Prostate gland (tissue), 2 donors: ENCODE measurements at regions of chr3 and their contacts with region 1.

Region 1: GRCh38 chr3:188052169-188053030 is 101.6 kb upstream of the LPP start:
- DNase-seq: peak; percentile 66
- H3K4me3 ChIP-seq: no peak overlapping the region
- H3K27ac ChIP-seq: peak overlapping the region; percentile 44 to 75
- H3K4me1 ChIP-seq: peaks cover 9% of the 10 kb centered on the region
- H3K27me3 ChIP-seq: no peaks in the 10 kb centered on the region
- CTCF ChIP-seq: peak; percentile 19 to 73 (median 40)
- POLR2A ChIP-seq: no peak

Region 2: DNA sequence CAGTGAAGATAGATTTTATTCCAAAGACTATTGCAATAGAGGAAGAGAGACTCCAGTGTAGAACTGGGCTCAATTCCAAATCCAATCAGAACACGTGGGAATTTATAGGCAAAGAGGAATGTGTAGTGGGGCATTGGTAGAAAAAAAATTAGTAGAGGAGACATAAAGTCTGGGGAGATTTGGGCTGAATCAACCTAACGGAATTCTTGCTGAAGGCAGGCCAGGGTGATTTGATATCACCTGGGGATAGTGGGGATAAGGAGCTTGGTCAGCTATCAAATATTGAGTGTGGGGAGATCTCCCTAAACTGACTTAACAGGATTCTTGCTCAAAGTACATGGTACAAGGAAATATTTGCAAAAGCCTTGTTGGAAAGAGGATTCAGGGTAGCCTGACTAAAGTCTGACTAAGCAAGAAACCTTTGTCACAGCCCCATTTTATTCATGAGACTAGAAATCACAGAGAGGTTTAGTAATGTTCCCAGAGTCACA is 411.8 kb before region 1 on chr3:
- intact Hi-C with region 1: no loop called
- DNase-seq: no peak
- H3K4me3 ChIP-seq: no peak overlapping the region
- H3K27ac ChIP-seq: no peak overlapping the region
- H3K4me1 ChIP-seq: no peaks in the 10 kb centered on the region
- H3K27me3 ChIP-seq: no peaks in the 10 kb centered on the region
- CTCF ChIP-seq: no peak
- POLR2A ChIP-seq: no peak

Region 3: GRCh38 chr3:187922704-187923416 is 129.5 kb before region 1 on chr3:
- intact Hi-C with region 1: no loop called
- DNase-seq: no peak
- H3K4me3 ChIP-seq: no peak overlapping the region
- H3K27ac ChIP-seq: no peak overlapping the region
- H3K4me1 ChIP-seq: no peaks in the 10 kb centered on the region
- H3K27me3 ChIP-seq: no peaks in the 10 kb centered on the region
- CTCF ChIP-seq: no peak
- POLR2A ChIP-seq: no peak

Region 4: DNA sequence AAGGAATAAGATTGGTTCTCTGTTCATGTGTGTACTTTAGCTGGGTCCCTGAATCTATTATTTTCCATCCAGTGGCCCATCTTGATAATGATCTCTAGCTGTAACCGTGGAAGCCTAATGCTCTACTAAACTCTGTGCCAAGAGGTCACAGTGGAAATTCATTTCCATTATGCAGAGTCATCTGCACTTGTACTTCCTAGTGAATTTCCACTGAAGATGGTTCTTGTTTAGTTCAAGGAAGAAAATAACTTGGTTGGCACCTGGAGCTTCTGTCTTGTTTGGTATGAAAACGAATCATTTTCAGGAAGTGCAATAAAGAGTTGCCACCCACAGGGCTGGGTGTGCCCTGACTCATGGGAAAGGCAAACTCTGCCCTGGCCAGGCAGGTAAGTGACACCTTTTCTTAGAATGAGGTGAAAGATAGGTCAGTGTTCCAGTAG is 111.9 kb after region 1 on chr3:
- intact Hi-C with region 1: no loop called
- DNase-seq: peak; percentile 56
- H3K4me3 ChIP-seq: no peak overlapping the region
- H3K27ac ChIP-seq: peak overlapping the region; percentile 58 to 61
- H3K4me1 ChIP-seq: peaks cover 5% of the 10 kb centered on the region
- H3K27me3 ChIP-seq: no peaks in the 10 kb centered on the region
- CTCF ChIP-seq: no peak
- POLR2A ChIP-seq: no peak

Region 5: GRCh38 chr3:188179006-188179966 is 126.9 kb after region 1 on chr3:
- intact Hi-C with region 1: loop called (anchors 5 kb)
- DNase-seq: peak; percentile 51
- H3K4me3 ChIP-seq: no peak overlapping the region
- H3K27ac ChIP-seq: peak overlapping the region; percentile 70 to 77
- H3K4me1 ChIP-seq: peaks cover 7% of the 10 kb centered on the region
- H3K27me3 ChIP-seq: no peaks in the 10 kb centered on the region
- CTCF ChIP-seq: peak in 1 of 4 experiments; percentile 17
- POLR2A ChIP-seq: no peak

Region 6: DNA sequence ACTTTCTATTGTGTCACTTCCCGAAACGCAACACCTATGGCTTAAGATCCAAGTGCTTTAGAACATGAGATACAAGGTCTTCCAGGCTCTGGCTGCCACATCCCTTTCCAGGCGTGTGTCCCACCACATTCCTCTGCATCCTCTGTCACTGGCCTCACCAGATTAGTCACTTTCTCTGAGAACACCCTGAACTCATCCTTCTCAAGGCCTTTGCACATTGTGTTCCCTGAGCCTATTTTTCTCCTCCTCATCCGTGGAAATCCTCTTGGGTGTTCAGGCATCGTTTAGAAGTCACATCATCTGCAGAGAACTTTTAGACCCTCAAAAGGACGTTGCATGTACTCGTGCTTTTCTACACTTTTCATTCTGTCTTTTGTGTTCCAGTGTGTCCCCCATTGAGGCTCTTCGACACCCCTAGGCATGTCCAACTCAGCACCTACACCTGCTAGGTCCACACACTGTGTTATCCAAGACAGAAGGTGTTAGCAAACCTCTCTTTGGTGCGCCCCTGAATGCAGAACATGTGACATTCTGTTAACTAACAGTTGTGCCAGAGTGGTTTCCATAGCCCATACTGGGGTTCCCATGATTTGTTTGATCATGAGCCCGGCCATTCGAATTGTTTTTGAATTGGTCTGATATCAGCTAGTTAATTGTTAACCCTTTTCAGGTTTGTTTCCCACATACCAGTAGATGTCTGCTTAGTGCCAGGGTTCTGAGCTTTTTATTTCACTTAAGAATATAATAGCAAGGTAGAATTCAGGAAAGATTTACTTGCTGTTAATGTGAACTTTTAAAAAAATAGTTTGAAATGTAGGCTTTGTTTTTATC is 168.8 kb after region 1 on chr3:
- intact Hi-C with region 1: loop called (anchors 5 kb)
- DNase-seq: no peak
- H3K4me3 ChIP-seq: no peak overlapping the region
- H3K27ac ChIP-seq: peak overlapping the region; percentile 67 to 80
- H3K4me1 ChIP-seq: no peaks in the 10 kb centered on the region
- H3K27me3 ChIP-seq: no peaks in the 10 kb centered on the region
- CTCF ChIP-seq: no peak
- POLR2A ChIP-seq: no peak

Region 7: GRCh38 chr3:188244395-188244861 is 192.0 kb after region 1 on chr3:
- intact Hi-C with region 1: no loop called
- DNase-seq: no peak
- H3K4me3 ChIP-seq: no peak overlapping the region
- H3K27ac ChIP-seq: no peak overlapping the region
- H3K4me1 ChIP-seq: no peaks in the 10 kb centered on the region
- H3K27me3 ChIP-seq: no peaks in the 10 kb centered on the region
- CTCF ChIP-seq: no peak
- POLR2A ChIP-seq: no peak

Region 8: DNA sequence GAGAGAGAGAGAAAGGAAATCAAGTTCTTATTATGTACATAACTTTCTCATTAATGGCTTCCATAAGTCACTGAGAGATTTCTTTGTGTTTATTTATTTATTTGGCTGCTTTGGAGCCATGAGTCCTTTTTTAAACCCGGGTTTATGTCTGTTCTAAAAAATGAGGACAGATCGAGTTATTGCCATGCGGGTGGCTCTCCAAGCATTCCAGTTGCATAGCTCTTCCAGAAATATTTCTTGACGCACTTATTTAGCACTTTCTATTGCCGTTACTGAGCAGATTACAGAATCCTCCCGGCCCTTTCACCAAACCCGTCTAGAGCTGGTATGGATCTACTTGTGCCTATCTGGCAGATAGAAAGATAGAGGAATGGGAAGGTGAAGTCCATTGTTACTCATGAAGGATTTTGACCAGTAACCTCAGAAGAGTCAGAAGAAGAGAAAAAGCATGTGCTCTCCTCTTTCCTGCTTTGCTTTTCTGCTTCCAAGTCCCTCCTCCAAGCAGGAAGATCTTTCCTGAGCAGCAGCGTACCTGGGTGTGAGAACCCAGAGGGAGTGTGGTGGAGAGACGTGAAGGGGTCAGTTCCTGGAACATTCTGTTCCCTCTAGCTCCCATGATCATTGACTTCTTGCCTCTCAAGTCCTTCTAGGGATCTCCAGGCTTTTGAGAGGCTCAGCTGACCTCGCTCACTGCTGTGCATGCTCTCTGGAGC is 214.3 kb after region 1 on chr3:
- intact Hi-C with region 1: loop called (anchors 5 kb)
- DNase-seq: peak; percentile 23
- H3K4me3 ChIP-seq: peak overlapping the region in 1 of 2 donors; percentile 5
- H3K27ac ChIP-seq: peak overlapping the region; percentile 73 to 85
- H3K4me1 ChIP-seq: peaks cover 33% of the 10 kb centered on the region
- H3K27me3 ChIP-seq: no peaks in the 10 kb centered on the region
- CTCF ChIP-seq: no peak
- POLR2A ChIP-seq: no peak

Region 9: DNA sequence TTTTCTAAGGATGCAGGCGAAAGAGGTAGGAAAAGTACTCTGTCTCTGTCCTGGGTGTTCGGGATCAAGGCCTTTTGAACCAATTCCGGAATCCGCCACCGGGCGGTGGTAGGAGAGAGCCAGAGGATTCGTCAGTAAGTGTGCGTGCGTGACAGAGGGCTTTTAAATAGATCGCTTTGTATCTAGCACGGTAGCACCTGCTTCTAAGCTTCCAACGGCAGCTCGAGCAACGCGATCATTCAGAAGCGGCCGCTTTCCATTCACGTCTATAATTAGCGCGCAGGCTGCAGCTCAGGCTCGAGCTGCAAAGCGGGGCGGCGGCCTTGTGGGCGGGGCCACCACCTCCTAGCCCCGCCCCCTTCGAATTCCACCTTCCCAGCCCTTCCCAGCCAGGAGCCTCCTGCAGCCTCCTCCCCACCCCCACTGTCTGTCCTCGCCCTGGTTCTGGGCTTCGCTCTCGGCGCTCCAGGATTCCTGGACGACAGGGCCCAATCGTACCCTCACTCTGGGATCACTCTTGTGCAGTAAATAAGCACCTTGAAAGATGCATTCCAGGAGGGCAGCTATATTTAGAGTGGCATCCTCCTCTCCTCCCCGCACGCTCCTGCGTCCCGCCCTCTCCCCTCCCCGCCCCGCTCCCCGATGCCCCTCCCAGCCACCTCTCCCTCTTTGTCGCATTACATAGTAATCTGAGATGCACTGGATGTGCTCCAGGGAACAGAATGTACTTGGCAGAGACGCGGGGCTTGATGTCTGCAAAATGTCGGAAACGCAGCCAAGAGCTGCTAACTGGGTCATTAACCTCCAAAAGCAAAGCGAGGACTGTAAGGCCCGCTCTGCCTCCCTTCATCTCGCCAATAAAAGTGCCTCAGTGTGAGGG is 895.2 kb after region 1 on chr3:
- intact Hi-C with region 1: loop called (anchors 5 kb)
- DNase-seq: peak; percentile 99
- H3K4me3 ChIP-seq: peak overlapping the region; percentile 24 to 30
- H3K27ac ChIP-seq: peak overlapping the region; percentile 90
- H3K4me1 ChIP-seq: peaks cover 9% of the 10 kb centered on the region
- H3K27me3 ChIP-seq: no peaks in the 10 kb centered on the region
- CTCF ChIP-seq: peak in 2 of 4 experiments; percentile 52 to 61
- POLR2A ChIP-seq: peak; percentile 45